MCF 10A (cell line): ENCODE measurements at regions of chr2 and their contacts with region 1.

Region 1: DNA sequence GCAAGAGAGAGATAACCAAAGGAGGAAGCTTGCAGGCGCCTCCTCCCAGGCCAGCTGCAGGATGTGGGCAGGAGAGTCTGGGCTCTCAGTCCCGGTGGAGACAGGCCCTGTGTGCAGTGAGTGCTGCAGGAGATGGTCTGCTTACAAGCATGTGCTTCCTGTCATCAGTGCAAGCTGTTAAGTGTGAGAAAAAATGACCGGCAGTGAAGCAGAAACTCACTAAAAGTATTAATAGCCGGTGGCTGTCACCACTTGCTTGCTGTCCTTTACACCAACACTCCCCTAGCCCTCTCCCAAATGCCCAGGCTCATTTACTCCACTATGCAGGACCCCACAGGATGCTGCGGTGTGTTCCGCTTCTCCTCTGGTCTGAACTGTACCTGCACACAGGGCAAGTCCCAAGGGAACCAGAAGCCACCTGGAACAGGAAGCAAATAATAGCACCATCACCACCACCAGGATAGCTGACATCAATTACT is 435.6 kb upstream of the HS6ST1 start:
- DNase-seq: no peak
- H3K4me3 Mint-ChIP-seq: no peak overlapping the region
- H3K27ac Mint-ChIP-seq: no peak overlapping the region
- H3K4me1 Mint-ChIP-seq: peaks cover 5% of the 10 kb centered on the region
- H3K27me3 Mint-ChIP-seq: no peaks in the 10 kb centered on the region
- CTCF ChIP-seq: no peak

Region 2: DNA sequence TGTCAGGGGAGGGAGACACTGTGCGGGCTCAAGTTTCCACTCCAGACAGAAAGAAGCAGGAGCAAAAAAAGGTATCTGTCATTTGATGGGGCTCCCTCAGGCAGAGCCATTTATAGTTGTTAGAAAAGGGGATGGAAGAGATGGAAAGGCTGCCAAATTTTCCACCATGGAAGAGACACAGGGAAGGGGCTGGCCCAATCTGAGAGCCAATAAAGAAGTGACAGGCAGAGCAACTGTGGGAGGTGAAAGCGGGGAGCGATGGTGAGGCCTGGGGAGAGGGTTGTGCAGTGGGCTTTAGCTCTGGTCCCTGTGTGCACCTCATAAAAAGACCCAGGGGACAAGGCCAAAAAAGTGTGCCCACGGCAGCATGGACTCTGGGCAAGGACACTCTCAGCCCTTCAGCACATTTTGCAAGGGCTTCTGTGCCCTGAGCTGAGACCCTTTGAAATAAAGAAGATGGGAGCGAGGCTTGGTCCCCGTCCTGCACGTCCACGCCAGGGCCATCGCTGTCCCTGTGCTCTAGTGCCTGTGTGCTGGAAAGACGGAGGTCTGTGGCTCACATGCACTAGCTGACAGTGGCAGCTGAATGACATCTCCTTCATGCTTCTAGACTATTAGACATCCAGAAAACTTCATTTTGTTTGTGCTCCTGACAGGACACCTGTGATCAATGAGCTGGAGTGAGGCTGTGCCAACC is 21.1 kb after region 1 on chr2:
- CTCF ChIA-PET with region 1: interaction called, 11 read pairs
- POLR2A ChIA-PET with region 1: no interaction called
- intact Hi-C with region 1: no loop called
- DNase-seq: no peak
- H3K4me3 Mint-ChIP-seq: no peak overlapping the region
- H3K27ac Mint-ChIP-seq: no peak overlapping the region
- H3K4me1 Mint-ChIP-seq: no peaks in the 10 kb centered on the region
- H3K27me3 Mint-ChIP-seq: no peaks in the 10 kb centered on the region
- CTCF ChIP-seq: no peak

Region 3: DNA sequence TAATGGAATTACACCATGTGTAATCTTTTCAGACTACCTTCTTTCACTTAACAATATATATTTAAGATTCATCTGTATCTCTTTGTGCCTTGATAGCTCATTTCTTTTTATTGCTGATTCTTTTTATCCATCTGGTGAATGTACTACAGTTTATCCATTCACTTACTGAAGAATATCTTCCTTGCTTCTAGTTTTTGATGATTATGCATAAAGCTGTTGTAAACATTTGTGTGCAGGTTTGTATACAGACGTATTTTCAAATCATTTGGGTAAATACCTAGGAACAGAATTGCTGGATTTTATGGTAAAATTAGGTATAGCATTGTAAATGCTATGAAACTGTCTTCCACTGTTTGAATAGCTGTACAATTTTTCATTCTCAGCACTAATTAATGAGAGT is 157.0 kb after region 1 on chr2:
- CTCF ChIA-PET with region 1: no interaction called
- POLR2A ChIA-PET with region 1: no interaction called
- intact Hi-C with region 1: no loop called
- DNase-seq: no peak
- H3K4me3 Mint-ChIP-seq: no peak overlapping the region
- H3K27ac Mint-ChIP-seq: no peak overlapping the region
- H3K4me1 Mint-ChIP-seq: no peaks in the 10 kb centered on the region
- H3K27me3 Mint-ChIP-seq: no peaks in the 10 kb centered on the region
- CTCF ChIP-seq: no peak

Region 4: DNA sequence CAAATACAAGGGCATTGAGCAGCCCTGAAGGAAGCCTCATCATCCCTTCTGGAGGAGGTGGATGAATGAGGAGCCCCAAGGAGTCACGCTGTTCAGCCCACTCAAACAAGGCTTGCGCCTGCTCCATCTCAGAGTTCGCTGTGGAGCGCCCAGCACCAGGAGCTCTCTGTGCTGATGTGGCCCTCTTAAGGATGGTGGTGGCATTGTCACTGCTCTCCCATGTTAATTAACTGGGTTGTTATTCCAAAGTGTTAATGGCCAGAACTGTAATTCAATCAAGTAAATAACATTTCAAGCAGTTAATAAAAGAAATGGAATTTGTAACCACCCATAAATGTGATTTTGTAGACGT is 499.2 kb after region 1 on chr2:
- CTCF ChIA-PET with region 1: no interaction called
- POLR2A ChIA-PET with region 1: no interaction called
- intact Hi-C with region 1: loop called (anchors 5 kb)
- DNase-seq: peak; percentile 6
- H3K4me3 Mint-ChIP-seq: no peak overlapping the region
- H3K27ac Mint-ChIP-seq: no peak overlapping the region
- H3K4me1 Mint-ChIP-seq: peaks cover under 1% of the 10 kb centered on the region
- H3K27me3 Mint-ChIP-seq: no peaks in the 10 kb centered on the region
- CTCF ChIP-seq: peak; percentile 26